HCT116 (cell line): ENCODE measurements at regions of chr2 and their contacts with region 1.

Region 1: GRCh38 chr2:27322766-27323595 is at the start of gene MPV17:
- DNase-seq: peak; percentile 88
- ATAC-seq: peak; percentile 82
- H3K4me3 ChIP-seq: peak within 1 kb of the TSS; percentile 85 to 90
- H3K27ac ChIP-seq: peak within 1 kb of the TSS; percentile 90
- H3K4me1 ChIP-seq: peaks cover 24 to 40% of the 10 kb centered on the region in 2 experiments
- H3K27me3 ChIP-seq: no peaks in the 10 kb centered on the region
- CTCF ChIP-seq: no peak
- POLR2A ChIP-seq: peak; percentile 84
- RAD21 ChIP-seq: no peak
- total RNA-seq, gene MPV17: 55.4 TPM

Region 2: DNA sequence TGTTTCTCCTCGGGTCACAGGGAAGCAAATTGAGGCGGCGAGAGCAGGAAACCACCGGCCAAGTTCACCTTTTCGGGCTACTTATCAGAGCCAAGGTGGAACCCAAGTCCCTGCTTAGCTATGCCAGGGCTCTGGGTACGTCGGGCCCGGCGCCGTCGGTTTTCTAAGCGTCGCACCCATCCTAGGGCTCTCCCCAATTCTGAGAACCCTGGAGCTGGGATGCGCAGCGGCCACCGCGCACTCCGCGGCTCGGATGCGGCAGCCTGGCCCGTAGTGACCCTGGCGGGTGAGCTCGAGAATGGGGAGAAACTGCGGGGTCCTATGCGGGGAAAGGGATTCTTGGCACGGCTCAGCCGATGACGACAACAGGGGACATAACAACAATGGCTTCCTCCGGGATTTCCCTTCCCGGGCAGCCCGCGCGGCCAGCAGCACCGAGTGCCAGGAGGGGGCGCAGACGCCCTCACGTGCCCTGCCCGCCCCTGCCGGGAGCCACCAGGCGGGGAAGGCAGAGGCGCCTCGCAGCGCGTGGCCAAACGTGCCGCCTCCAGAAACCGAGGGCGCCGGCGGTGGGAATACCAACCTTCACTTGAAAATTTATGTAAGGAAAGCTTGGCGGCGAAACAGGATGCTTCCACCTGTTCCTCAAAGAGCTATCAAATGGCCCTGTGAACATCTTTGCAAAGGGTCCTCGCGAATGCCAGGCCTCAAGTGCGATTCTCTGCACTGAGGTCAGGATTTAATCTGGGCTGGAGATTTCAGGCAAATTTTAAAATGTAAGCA is 58.0 kb before region 1 on chr2:
- CTCF ChIA-PET with region 1: no interaction called
- POLR2A ChIA-PET with region 1: no interaction called
- RAD21 ChIA-PET with region 1: no interaction called
- intact Hi-C with region 1: loop called (anchors 5 kb)
- DNase-seq: peak; percentile 54
- ATAC-seq: peak; percentile 69
- H3K4me3 ChIP-seq: peak overlapping the region; percentile 52 to 84
- H3K27ac ChIP-seq: peak overlapping the region; percentile 45; the same call in 1 of the 2 replicates
- H3K4me1 ChIP-seq: peaks cover 19 to 37% of the 10 kb centered on the region in 2 experiments
- H3K27me3 ChIP-seq: peaks cover 13% of the 10 kb centered on the region; the same call in 1 of the 2 replicates
- CTCF ChIP-seq: peak; percentile 68 to 72 (median 70); a peak in 5 of 6 replicates
- POLR2A ChIP-seq: no peak
- RAD21 ChIP-seq: no peak; the same call in 1 of the 2 replicates

Region 3: DNA sequence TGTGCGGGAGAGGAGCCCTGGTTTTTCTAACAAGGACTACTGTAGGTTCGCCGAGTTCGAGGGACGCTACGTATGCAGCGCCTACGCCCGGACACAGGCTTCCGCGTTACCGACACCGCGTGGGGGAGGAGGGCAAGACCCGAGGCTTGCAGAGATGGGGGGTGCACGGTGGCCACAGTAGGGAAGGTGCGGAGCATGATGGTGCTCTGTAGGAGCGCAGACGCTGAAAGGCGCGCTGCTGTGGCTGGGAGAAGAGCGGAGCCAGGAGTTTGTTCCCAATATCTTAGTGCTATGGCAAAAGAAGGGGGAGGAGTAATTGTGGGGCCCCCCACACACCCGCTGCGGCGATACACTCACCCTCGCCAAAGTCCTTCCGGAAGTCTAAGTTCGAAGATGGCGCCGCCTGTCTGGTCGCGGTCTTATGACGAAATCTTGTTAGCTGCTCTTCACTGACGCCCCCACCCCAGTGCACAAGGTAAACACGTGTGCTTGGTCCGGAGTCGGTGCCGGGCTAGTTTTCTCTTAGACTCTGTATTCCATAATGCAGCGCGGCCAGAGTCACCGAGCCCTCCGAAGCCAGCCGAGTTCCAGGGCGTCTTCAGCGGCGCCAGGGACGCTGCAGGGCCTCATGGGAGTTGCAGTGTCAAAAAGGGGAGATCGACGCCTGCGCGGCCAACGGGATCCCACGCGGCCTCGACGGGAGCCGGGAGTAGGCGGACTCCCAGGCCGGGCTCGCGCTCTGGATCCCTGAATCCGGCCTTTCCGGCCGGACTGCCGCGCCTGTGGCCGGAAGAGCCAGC is 33.6 kb after region 1 on chr2 and contains the start of gene GTF3C2:
- CTCF ChIA-PET with region 1: interaction called, 4 read pairs
- POLR2A ChIA-PET with region 1: no interaction called
- RAD21 ChIA-PET with region 1: no interaction called
- intact Hi-C with region 1: loop called (anchors 1 kb)
- DNase-seq: peak; percentile 98
- ATAC-seq: peak; percentile 85
- H3K4me3 ChIP-seq: peak within 1 kb of the TSS; percentile 99 to 100
- H3K27ac ChIP-seq: peak within 1 kb of the TSS; percentile 98
- H3K4me1 ChIP-seq: peaks cover 12 to 28% of the 10 kb centered on the region in 2 experiments
- H3K27me3 ChIP-seq: no peaks in the 10 kb centered on the region
- CTCF ChIP-seq: no peak
- POLR2A ChIP-seq: no peak
- RAD21 ChIP-seq: no peak
- total RNA-seq, gene GTF3C2: 88.2 TPM

Region 4: DNA sequence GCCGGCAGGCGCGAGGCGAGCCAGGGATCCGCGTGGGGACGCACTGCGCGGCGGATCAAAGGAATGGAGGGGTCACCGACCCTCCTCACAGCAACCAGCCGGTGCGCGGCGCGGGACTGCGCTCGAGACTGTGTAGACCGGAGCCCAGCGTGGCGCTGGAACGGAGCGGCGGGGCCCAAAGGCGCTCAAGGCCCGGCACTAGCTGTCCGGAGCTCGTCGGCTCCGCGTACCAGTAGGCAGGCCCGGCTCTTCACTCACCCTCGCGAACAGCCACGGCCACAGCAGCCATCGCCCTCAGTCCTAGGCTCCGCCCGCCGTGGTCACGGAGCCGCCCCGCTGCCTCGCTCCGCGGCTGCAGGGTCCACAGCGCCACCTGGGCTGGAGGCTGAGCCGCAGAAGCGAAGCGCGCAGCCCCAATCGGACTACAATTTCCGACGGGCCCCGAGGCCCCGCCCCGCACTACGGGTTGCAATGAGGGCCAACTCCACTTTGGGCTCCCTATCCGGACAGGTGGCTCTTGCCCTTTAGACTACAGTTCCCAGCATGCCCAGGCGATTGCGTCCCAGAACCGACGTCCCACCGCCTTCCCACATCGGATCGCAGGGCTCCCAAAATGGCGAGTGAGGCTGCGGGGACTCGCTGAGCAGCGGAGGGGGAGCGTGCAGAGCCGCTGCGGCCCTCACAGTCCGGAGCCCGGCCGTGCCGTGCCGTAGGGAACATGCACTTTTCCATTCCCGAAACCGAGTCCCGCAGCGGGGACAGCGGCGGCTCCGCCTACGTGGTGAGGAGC is 47.2 kb after region 1 on chr2 and contains the starts of genes EIF2B4 and SNX17:
- CTCF ChIA-PET with region 1: no interaction called
- POLR2A ChIA-PET with region 1: interaction called, 4 read pairs
- RAD21 ChIA-PET with region 1: no interaction called
- intact Hi-C with region 1: loop called (anchors 5 kb)
- DNase-seq: peak; percentile 98
- ATAC-seq: peak; percentile 94
- H3K4me3 ChIP-seq: peak within 1 kb of the TSS; percentile 64 to 96
- H3K27ac ChIP-seq: peak within 1 kb of the TSS; percentile 85
- H3K4me1 ChIP-seq: peaks cover 10 to 29% of the 10 kb centered on the region in 2 experiments; a peak in 3 of 4 replicates
- H3K27me3 ChIP-seq: no peaks in the 10 kb centered on the region
- CTCF ChIP-seq: peak in 2 of 3 experiments; percentile 69 to 79; a peak in 4 of 6 replicates
- POLR2A ChIP-seq: peak; percentile 77
- RAD21 ChIP-seq: no peak
- total RNA-seq, gene EIF2B4: 43.8 TPM
- total RNA-seq, gene SNX17: 90.5 TPM